ENCODE measurements at regions of chr13 and their contacts with region 1.

Region 1: GRCh38 chr13:21458813-21459701 is at the start of gene ZDHHC20:
- DNase-seq: peak; percentile 92
- ATAC-seq: peak; percentile 98 to 99
- total RNA-seq, gene ZDHHC20: 21.7 to 24.2 TPM

Region 2: DNA sequence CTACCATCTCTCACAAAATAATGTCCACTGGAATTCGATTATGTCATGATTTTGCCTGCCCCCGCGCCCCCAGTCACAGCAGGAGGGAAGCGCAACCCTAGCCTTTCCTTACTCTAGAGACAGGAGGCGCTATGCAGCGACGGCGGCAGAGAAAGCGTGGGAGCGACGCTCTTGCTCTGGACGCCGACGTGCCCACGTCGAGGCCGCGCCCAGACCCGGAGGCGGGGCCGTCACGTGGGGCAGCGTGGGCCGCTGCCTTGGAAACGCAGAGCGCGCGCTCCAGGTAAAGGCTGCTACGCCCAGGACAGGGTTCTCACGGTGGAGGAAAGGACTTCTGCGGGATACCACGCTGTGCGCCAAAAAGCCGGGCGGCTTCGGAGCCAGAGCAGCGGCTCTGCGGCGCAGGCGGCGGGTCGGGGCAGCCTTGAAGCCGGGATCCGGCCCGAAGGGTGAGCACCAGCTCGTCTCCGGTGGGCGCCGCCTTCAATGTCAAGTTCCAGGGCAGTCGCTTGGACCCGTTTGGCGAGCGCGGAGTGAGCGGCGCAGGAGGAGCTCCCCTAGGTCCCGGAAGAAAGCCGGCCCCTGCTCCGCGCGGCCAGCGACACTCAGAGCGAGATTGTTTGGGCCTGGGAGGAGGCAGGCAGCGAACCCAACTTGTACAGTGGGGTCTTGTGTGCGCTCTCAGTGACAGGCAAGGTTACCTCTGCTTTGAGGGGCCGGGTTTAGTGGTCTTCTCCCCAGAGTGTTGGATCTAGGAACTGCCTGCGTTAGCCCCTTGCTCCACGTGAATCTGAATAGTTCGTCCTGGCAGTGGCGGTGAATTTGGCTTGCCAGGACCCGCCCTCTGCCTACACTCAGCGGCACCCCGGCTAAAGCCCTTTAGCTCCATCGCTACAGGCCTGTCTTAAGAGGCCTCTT is 160.9 kb before region 1 on chr13:
- intact Hi-C with region 1: loop called in 1 of 2 experiments (anchors 5 kb)
- DNase-seq: peak; percentile 87
- ATAC-seq: peak; percentile 100

Region 3: GRCh38 chr13:21402586-21403228 is 56.4 kb before region 1 on chr13:
- intact Hi-C with region 1: loop called in 1 of 2 experiments (anchors 10 kb)
- DNase-seq: no peak
- ATAC-seq: no peak

Region 4: DNA sequence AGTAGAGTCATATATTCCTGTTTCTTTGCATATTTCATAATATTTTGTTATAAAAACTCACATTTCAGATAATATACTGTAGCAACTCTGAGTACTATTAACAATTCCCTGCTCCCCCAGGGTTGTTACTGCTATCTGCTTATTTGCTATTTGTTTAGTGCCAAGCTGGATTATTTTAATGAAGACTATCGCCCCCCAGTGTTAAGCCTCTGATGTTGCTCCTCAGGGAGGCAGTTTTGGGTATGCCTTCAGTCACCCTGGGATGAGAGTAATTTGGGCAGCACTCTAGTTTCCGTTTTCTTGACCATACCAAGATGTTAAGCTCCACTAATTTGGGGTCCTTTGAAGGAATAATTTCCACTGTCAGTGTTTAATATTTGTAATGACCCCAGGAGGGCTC is 98.9 kb after region 1 on chr13:
- intact Hi-C with region 1: no loop called
- DNase-seq: no peak
- ATAC-seq: peak in 1 of 2 donors; percentile 47

Measured in left cardiac atrium (tissue), 4 donors.